Endothelial cell of umbilical vein (primary cell): ENCODE measurements at regions of chr11 and their contacts with region 1.

Region 1: DNA sequence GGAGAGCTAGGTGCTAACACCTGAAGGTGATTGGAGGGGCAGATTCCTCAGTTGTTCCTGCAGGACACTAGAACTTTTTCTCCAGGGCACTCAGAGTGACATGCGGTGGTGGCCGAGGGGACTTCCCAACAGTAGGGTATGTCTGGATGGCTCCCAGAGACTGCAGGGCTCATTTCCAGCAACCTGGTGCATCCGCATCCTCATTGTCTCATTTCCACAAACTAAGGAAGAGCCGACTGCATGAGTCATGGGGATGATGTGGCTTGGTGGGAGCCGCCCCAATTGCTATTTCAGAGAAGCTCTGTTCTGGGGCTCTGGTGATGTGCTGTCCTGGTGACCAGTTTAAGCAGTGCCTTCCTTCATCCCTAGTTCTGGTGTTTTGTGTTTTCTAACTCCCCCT is 2.8 kb upstream of the ROBO4 start:
- DNase-seq: peak; percentile 75
- H3K4me3 ChIP-seq: peak overlapping the region in 1 of 3 experiments; percentile 41
- H3K27ac ChIP-seq: peak overlapping the region; percentile 95
- H3K4me1 ChIP-seq: peaks cover 51% of the 10 kb centered on the region
- H3K27me3 ChIP-seq: no peaks in the 10 kb centered on the region
- CTCF ChIP-seq: no peak
- POLR2A ChIP-seq: peak; percentile 67

Region 2: DNA sequence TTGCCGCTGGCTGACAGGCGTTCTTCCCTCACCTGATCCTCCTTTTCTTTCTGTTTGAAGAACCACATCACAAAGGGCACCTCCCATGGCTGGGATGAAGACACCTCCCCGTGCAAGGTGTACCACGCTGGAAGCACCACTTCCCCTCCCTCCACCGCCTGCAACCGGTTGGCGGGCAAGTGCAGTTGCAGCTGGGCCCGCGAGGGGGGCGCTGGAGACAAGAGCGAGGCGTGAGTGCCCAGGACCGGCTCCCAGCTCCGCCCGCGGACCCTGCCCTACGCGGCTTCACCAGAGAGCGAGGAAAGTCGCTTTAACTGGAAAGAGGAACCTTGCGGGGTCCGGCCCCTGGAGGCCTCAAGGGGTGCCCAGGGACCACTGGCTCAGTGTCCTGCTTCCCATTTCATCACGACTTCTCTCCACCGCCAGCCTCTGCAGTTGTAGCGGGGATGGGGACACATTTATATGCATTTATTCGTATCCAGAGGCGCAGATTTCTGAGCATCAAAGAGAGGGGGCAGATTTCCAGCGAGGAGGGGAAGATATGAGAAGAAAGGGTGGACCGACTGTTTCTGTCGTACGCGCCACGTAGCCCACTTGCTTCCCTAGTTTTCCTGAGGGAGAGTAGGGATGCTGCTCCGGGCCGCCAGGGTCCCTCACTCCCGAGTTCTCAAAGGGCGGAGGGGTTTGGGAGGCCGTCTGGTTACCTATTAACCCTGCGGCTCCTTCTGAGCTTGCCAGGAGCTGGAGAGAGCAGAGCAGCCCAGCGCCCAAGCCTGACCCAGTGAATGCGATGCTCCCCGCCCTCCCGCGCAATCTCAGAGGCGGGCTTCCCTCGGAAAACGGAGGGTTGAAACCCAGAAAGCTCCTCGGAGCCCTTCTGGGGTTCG is 141.9 kb before region 1 on chr11:
- CTCF ChIA-PET with region 1: interaction called, 5 read pairs
- POLR2A ChIA-PET with region 1: no interaction called
- dilution Hi-C with region 1: no loop called
- intact Hi-C with region 1: loop called (anchors 1 kb)
- DNase-seq: peak; percentile 81
- H3K4me3 ChIP-seq: peak overlapping the region; percentile 23 to 65 (median 36)
- H3K27ac ChIP-seq: peak overlapping the region; percentile 97
- H3K4me1 ChIP-seq: peaks cover 65% of the 10 kb centered on the region
- H3K27me3 ChIP-seq: no peaks in the 10 kb centered on the region
- CTCF ChIP-seq: peak; percentile 73 to 91
- POLR2A ChIP-seq: peak; percentile 42

Region 3: GRCh38 chr11:124915541-124916369 is 15.3 kb after region 1 on chr11:
- CTCF ChIA-PET with region 1: interaction called, 38 read pairs
- POLR2A ChIA-PET with region 1: interaction called, 6 read pairs
- dilution Hi-C with region 1: no loop called
- intact Hi-C with region 1: loop called (anchors 1 kb)
- DNase-seq: peak; percentile 60
- H3K4me3 ChIP-seq: no peak overlapping the region
- H3K27ac ChIP-seq: peak overlapping the region; percentile 83
- H3K4me1 ChIP-seq: peaks cover 16% of the 10 kb centered on the region
- H3K27me3 ChIP-seq: no peaks in the 10 kb centered on the region
- CTCF ChIP-seq: no peak
- POLR2A ChIP-seq: no peak

Region 4: GRCh38 chr11:124953753-124954589 is 53.5 kb after region 1 on chr11 and contains the start of gene CCDC15:
- CTCF ChIA-PET with region 1: interaction called, 40 read pairs
- POLR2A ChIA-PET with region 1: interaction called, 36 read pairs
- dilution Hi-C with region 1: no loop called
- intact Hi-C with region 1: loop called (anchors 1 kb)
- DNase-seq: peak; percentile 98
- H3K4me3 ChIP-seq: peak within 1 kb of the TSS; percentile 14 to 66 (median 57)
- H3K27ac ChIP-seq: peak within 1 kb of the TSS; percentile 72
- H3K4me1 ChIP-seq: peaks cover 13% of the 10 kb centered on the region
- H3K27me3 ChIP-seq: peaks cover 0 to 3% of the 10 kb centered on the region in 2 experiments
- CTCF ChIP-seq: no peak
- POLR2A ChIP-seq: peak; percentile 93
- total RNA-seq, gene CCDC15: 3.8 and 4.6 TPM in 2 replicates

Region 5: DNA sequence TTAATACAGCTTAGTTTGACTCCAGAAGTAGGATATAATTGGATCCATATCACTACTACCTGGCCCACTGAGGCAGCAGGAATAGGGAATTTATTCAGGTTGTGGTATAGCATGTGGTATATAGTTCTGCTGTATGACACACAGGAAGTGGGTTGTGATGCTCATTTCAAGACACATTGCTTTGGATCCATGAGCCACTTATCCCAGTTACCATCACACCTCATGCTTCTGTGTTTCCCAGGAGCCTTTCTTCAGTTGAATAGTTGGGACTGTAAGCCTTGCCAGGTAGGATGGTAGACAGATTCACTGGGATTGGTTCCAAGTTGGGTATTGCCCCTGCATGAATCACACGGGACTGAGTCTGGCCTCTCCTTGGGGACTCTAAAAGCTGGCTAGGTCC is 152.7 kb after region 1 on chr11:
- CTCF ChIA-PET with region 1: no interaction called
- POLR2A ChIA-PET with region 1: no interaction called
- dilution Hi-C with region 1: no loop called
- intact Hi-C with region 1: no loop called
- DNase-seq: no peak
- H3K4me3 ChIP-seq: no peak overlapping the region
- H3K27ac ChIP-seq: no peak overlapping the region
- H3K4me1 ChIP-seq: no peaks in the 10 kb centered on the region
- H3K27me3 ChIP-seq: no peaks in the 10 kb centered on the region
- CTCF ChIP-seq: no peak
- POLR2A ChIP-seq: no peak

Region 6: GRCh38 chr11:125111343-125112207 is 211.1 kb after region 1 on chr11 and contains the start of gene TMEM218:
- CTCF ChIA-PET with region 1: no interaction called
- POLR2A ChIA-PET with region 1: no interaction called
- dilution Hi-C with region 1: no loop called
- intact Hi-C with region 1: loop called (anchors 1 kb)
- DNase-seq: peak; percentile 100
- H3K4me3 ChIP-seq: peak within 1 kb of the TSS; percentile 57 to 85 (median 72)
- H3K27ac ChIP-seq: peak within 1 kb of the TSS; percentile 10
- H3K4me1 ChIP-seq: peaks cover 6% of the 10 kb centered on the region
- H3K27me3 ChIP-seq: peaks cover 0 to 1% of the 10 kb centered on the region in 2 experiments
- CTCF ChIP-seq: no peak
- POLR2A ChIP-seq: no peak
- total RNA-seq, gene TMEM218: 17.9 and 23.8 TPM in 2 replicates

Region 7: GRCh38 chr11:125390946-125391345 is 490.5 kb after region 1 on chr11:
- CTCF ChIA-PET with region 1: no interaction called
- POLR2A ChIA-PET with region 1: no interaction called
- dilution Hi-C with region 1: no loop called
- intact Hi-C with region 1: loop called (anchors 1 kb)
- DNase-seq: peak; percentile 79
- H3K4me3 ChIP-seq: peak overlapping the region in 1 of 3 experiments; percentile 23
- H3K27ac ChIP-seq: peak overlapping the region; percentile 73
- H3K4me1 ChIP-seq: peaks cover 18% of the 10 kb centered on the region
- H3K27me3 ChIP-seq: peaks cover 0 to 2% of the 10 kb centered on the region in 2 experiments
- CTCF ChIP-seq: no peak
- POLR2A ChIP-seq: no peak